Right lobe of liver (tissue), 6 donors: ENCODE measurements at regions of chr3 and their contacts with region 1.

Region 1: DNA sequence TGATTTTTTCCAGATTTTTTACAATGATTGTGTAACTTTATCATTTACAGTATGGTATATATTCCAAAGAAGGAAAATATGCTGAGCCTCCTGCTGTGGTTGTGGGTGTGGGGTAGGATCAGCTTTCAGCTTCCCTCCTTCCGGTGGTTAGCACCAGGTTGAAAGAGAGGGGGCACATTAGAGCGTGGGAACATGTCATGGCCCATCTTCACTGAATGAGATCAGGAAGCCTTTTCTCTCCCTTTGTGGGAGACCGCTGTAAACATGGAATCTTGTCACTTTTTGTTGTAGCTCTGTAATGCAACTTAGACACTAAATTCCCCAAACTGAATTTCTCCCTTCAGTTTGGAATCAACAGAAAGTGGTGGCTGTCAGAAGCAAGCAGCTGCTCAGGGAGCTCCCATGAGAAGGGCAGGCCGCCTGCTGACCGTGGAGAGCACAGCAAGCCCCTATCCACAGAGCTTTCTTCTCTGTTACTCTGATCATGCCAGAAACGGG is 86.7 kb upstream of the LIMD1 start:
- DNase-seq: no peak
- ATAC-seq: peak in 3 of 4 donors; percentile 17 to 44 (median 24)
- H3K4me3 ChIP-seq: no peak overlapping the region
- H3K27ac ChIP-seq: no peak overlapping the region
- H3K4me1 ChIP-seq: peaks cover 0 to 30% (median 10%) of the 10 kb centered on the region in 4 donors
- H3K27me3 ChIP-seq: no peaks in the 10 kb centered on the region
- CTCF ChIP-seq: peak in 1 of 4 donors; percentile 21
- POLR2A ChIP-seq: no peak

Region 2: GRCh38 chr3:45037734-45038455 is 470.0 kb before region 1 on chr3:
- intact Hi-C with region 1: loop called in 1 of 2 experiments (anchors 10 kb)
- DNase-seq: peak; percentile 88 to 92 (median 89)
- ATAC-seq: peak; percentile 95 to 97 (median 96)
- H3K4me3 ChIP-seq: no peak overlapping the region
- H3K27ac ChIP-seq: no peak overlapping the region
- H3K4me1 ChIP-seq: peaks cover 0 to 6% (median 0%) of the 10 kb centered on the region in 4 donors
- H3K27me3 ChIP-seq: no peaks in the 10 kb centered on the region
- CTCF ChIP-seq: peak; percentile 93 to 98 (median 96)
- POLR2A ChIP-seq: no peak

Region 3: DNA sequence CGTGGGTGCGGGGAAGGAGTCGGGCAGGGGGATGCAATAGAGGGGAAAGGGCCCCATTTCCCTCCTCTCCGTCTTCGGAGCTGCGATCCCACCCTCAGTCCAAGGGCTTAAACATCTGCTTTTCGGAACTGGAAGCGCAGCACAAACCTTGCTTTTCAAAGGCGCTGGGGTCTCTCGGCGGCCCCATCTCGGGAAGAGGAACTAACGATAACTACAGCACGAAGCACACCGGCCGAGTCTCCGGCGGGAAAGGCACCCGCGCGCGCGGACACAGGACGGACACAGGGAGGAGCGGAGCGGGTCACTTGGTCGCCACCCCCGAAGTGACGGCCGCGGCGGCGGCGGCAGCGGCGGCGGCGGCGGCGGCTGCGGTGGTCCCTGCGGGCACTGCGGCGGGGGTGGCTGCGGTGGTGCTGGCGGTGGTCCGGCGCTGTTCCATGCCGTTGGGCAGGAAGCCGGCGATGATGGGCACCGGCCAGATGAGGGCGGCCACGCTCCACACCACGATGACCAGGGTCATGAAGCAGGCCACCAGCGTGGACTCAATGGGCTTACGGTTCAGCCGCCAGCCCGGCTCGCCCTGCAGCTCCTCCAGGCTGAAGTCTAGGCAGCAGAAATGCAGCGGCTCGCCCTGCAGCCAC is 282.9 kb before region 1 on chr3:
- intact Hi-C with region 1: loop called in 1 of 2 experiments (anchors 10 kb)
- DNase-seq: peak; percentile 84 to 88 (median 87)
- ATAC-seq: peak; percentile 88 to 90 (median 90)
- H3K4me3 ChIP-seq: peak overlapping the region; percentile 15 to 54 (median 38)
- H3K27ac ChIP-seq: no peak overlapping the region
- H3K4me1 ChIP-seq: peaks cover 0 to 5% (median 0%) of the 10 kb centered on the region in 4 donors
- H3K27me3 ChIP-seq: peaks cover 0 to 8% of the 10 kb centered on the region in 2 donors
- CTCF ChIP-seq: peak; percentile 53 to 70 (median 62)
- POLR2A ChIP-seq: no peak

Region 4: GRCh38 chr3:45343947-45344346 is 163.9 kb before region 1 on chr3:
- intact Hi-C with region 1: no loop called
- DNase-seq: no peak
- ATAC-seq: no peak
- H3K4me3 ChIP-seq: no peak overlapping the region
- H3K27ac ChIP-seq: no peak overlapping the region
- H3K4me1 ChIP-seq: no peaks in the 10 kb centered on the region
- H3K27me3 ChIP-seq: no peaks in the 10 kb centered on the region
- CTCF ChIP-seq: no peak
- POLR2A ChIP-seq: no peak

Region 5: DNA sequence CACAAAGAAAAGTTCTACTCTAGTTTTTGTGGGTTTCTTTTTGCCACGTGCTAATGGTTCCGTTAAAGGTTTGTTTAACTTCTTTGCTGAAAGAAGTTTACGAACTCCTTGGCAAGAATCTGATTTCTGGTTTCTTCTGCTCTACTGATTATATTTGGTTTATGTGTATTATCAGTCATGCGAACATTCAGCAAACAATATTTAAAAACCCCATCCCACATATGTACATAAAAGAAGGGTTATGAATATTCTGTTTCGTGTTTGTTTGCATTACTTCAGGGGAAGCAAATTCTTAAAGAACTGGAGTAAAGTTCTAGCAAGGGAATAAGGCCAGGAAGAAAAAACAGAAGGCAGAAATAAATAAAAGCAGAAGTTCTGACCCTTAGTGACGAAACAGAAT is 109.7 kb before region 1 on chr3:
- intact Hi-C with region 1: no loop called
- DNase-seq: no peak
- ATAC-seq: no peak
- H3K4me3 ChIP-seq: no peak overlapping the region
- H3K27ac ChIP-seq: no peak overlapping the region
- H3K4me1 ChIP-seq: no peaks in the 10 kb centered on the region
- H3K27me3 ChIP-seq: no peaks in the 10 kb centered on the region
- CTCF ChIP-seq: no peak
- POLR2A ChIP-seq: no peak

Region 6: GRCh38 chr3:45664578-45664977 is 156.7 kb after region 1 on chr3:
- intact Hi-C with region 1: no loop called
- DNase-seq: peak in 1 of 3 donors; percentile 60
- ATAC-seq: peak; percentile 59 to 69 (median 64)
- H3K4me3 ChIP-seq: peak overlapping the region; percentile 12 to 37 (median 17)
- H3K27ac ChIP-seq: peak overlapping the region in 2 of 3 donors; percentile 20 to 47
- H3K4me1 ChIP-seq: peaks cover 0 to 25% (median 9%) of the 10 kb centered on the region in 4 donors
- H3K27me3 ChIP-seq: no peaks in the 10 kb centered on the region
- CTCF ChIP-seq: no peak
- POLR2A ChIP-seq: no peak

Region 7: DNA sequence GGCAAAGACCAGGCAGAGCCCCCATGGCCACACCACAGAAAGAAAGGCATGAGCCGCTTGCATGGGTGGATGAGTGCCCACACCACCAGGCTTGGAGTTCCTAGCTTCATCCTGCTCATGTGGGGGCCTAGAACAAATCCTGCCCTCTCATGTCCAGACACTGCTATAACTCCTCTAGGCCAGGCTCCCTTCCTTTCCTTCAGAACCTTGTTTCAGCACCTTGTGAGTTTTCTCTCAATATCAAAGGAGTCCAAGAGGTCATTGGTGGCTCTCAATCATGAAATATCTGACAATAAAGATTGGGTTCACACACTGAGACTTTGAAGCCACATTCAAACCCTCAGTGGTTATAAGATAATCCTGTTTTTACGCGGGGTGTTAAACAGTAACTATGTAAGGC is 275.8 kb after region 1 on chr3:
- intact Hi-C with region 1: no loop called
- DNase-seq: peak in 1 of 3 donors; percentile 12
- ATAC-seq: no peak
- H3K4me3 ChIP-seq: no peak overlapping the region
- H3K27ac ChIP-seq: no peak overlapping the region
- H3K4me1 ChIP-seq: peaks cover 0 to 9% (median 4%) of the 10 kb centered on the region in 4 donors
- H3K27me3 ChIP-seq: no peaks in the 10 kb centered on the region
- CTCF ChIP-seq: no peak
- POLR2A ChIP-seq: no peak